Endothelial cell of umbilical vein (primary cell): ENCODE measurements at regions of chr11 and their contacts with region 1.

Region 1: GRCh38 chr11:128290106-128290840 is 297.1 kb downstream of the ETS1 start:
- DNase-seq: peak; percentile 77
- H3K4me3 ChIP-seq: no peak overlapping the region
- H3K27ac ChIP-seq: no peak overlapping the region
- H3K4me1 ChIP-seq: no peaks in the 10 kb centered on the region
- H3K27me3 ChIP-seq: no peaks in the 10 kb centered on the region
- CTCF ChIP-seq: peak; percentile 71 to 72
- POLR2A ChIP-seq: no peak

Region 2: GRCh38 chr11:128172046-128172878 is 118.0 kb before region 1 on chr11:
- CTCF ChIA-PET with region 1: interaction called, 21 read pairs
- POLR2A ChIA-PET with region 1: interaction called, 3 read pairs
- dilution Hi-C with region 1: no loop called
- intact Hi-C with region 1: loop called (anchors 1 kb)
- DNase-seq: peak; percentile 91
- H3K4me3 ChIP-seq: no peak overlapping the region
- H3K27ac ChIP-seq: peak overlapping the region; percentile 42
- H3K4me1 ChIP-seq: peaks cover 9% of the 10 kb centered on the region
- H3K27me3 ChIP-seq: no peaks in the 10 kb centered on the region
- CTCF ChIP-seq: peak; percentile 64 to 74
- POLR2A ChIP-seq: no peak

Region 3: DNA sequence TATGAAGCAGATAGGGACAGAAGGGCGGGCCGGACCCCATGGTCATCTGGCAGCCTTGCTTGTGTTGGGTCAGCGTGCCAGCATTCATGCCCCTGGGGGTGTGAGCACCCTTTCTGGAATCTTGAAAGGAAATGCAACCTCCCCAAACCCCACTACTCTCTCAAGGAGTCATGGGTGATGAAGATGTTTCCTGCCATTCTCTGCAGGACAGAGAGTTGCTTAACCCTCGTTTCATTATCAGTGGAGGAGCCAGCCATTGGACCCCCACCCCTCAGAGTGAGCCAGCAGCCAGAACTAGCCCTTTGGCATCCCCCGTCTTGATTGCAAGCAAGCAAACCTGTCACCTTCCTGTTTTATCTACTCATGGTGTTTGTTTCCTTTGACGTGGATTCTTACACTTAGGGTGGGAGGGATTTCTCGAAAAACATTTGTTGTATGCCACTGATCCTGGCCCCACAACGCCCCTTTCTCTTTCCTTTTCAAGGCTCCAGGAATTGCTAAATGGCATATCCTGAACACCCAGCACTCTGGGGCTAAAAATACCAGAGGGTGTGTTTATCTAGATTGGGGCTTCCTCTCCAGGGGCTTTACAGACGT is 38.8 kb after region 1 on chr11:
- CTCF ChIA-PET with region 1: interaction called, 3 read pairs
- POLR2A ChIA-PET with region 1: no interaction called
- dilution Hi-C with region 1: no loop called
- intact Hi-C with region 1: loop called (anchors 1 kb)
- DNase-seq: peak; percentile 93
- H3K4me3 ChIP-seq: no peak overlapping the region
- H3K27ac ChIP-seq: peak overlapping the region; percentile 57
- H3K4me1 ChIP-seq: peaks cover 32% of the 10 kb centered on the region
- H3K27me3 ChIP-seq: no peaks in the 10 kb centered on the region
- CTCF ChIP-seq: no peak
- POLR2A ChIP-seq: peak; percentile 26

Region 4: GRCh38 chr11:128458321-128458720 is 168.0 kb after region 1 on chr11:
- CTCF ChIA-PET with region 1: interaction called, 4 read pairs
- POLR2A ChIA-PET with region 1: no interaction called
- dilution Hi-C with region 1: no loop called
- intact Hi-C with region 1: loop called (anchors 2 kb)
- DNase-seq: peak; percentile 62
- H3K4me3 ChIP-seq: no peak overlapping the region
- H3K27ac ChIP-seq: peak overlapping the region; percentile 61
- H3K4me1 ChIP-seq: peaks cover 11% of the 10 kb centered on the region
- H3K27me3 ChIP-seq: no peaks in the 10 kb centered on the region
- CTCF ChIP-seq: no peak
- POLR2A ChIP-seq: no peak

Region 5: DNA sequence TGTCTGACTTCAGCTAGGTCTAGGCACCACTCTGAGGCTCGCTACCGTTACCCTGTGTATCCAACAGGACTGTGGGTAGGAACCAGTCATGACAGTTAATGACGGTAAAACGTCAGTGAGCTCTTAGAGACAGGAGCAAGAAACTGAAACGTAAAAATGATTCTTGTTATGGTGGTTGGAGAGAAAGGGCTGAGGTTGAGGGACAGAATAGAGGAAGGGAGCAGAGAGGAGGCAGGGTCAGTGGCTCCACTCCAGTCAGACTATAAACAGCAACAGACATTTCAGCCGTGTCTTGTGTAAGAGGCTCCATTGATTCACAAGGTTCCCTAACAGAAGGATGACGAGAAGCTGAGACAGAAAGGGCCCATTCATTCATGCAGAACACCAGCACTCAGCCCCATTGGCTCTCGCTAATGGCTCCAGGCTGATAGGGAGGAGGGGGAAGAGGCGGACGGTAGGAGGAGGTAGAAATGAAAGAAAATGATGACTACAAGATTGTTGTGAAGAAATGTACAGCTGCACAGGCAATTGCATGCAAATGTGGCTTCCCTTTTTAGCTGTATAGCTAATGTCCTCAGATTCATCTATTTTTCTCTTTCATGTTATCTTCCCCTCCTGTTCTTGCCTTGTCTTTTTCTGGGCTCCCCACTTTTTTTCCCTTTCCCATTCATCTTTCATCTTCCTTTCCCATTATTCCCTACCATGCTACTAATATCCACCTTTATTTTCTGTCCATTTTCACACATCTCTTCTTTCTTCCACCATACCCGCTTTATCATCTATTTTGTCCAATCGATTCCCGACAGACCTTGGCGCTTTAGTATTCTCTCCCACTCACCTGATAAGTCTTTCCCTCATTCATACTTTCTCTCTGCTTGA is 262.7 kb after region 1 on chr11:
- CTCF ChIA-PET with region 1: interaction called, 6 read pairs
- POLR2A ChIA-PET with region 1: no interaction called
- dilution Hi-C with region 1: no loop called
- intact Hi-C with region 1: loop called (anchors 1 kb)
- DNase-seq: no peak
- H3K4me3 ChIP-seq: no peak overlapping the region
- H3K27ac ChIP-seq: no peak overlapping the region
- H3K4me1 ChIP-seq: peaks cover 11% of the 10 kb centered on the region
- H3K27me3 ChIP-seq: peaks cover 4 to 6% of the 10 kb centered on the region in 2 experiments
- CTCF ChIP-seq: no peak
- POLR2A ChIP-seq: no peak

Region 6: DNA sequence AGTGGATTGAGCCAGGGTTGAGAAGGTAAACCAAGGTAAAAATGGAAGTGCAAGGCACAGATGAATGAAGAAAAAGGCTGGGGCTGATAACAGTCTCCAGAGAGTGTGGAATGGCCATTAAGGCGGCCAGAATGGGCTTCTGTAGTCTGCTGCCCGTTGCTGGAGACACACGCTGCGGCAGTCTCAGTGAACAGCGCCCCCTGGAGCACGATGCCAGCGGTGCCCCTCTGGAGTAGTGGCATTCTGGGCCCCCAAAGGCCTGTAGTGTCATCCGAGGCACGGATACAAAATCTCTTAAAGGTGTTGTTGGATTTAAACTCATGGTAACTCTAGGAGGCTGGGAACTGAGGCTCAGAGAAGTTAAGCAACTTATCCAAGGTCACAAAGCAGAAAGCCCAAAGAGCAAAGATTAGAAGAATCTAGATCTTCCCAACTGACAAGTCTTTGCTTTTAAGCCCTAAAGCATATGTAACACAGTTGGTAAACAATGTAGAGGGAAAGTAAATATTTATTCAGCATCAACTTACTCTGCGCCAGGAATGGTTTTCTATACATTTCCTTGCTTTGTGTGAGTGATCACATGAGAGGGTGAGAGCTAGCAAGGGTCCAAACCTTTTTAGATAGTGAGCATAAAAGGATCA is 558.7 kb after region 1 on chr11:
- CTCF ChIA-PET with region 1: no interaction called
- POLR2A ChIA-PET with region 1: no interaction called
- dilution Hi-C with region 1: no loop called
- intact Hi-C with region 1: loop called (anchors 5 kb)
- DNase-seq: peak; percentile 72
- H3K4me3 ChIP-seq: no peak overlapping the region
- H3K27ac ChIP-seq: no peak overlapping the region
- H3K4me1 ChIP-seq: peaks cover 4% of the 10 kb centered on the region
- H3K27me3 ChIP-seq: no peaks in the 10 kb centered on the region
- CTCF ChIP-seq: peak; percentile 94 to 97
- POLR2A ChIP-seq: no peak